A549 (cell line): ENCODE measurements at regions of chr12 and their contacts with region 1.

Region 1: GRCh38 chr12:121005346-121005815 is 10.9 kb downstream of the C12orf43 start:
- DNase-seq: peak in 1 of 2 experiments; percentile 79
- ATAC-seq: peak; percentile 55 to 70; a peak in 4 of 6 replicates
- H3K4me3 ChIP-seq: no peak overlapping the region
- H3K27ac ChIP-seq: no peak overlapping the region
- H3K4me1 ChIP-seq: peaks cover 4% of the 10 kb centered on the region; the same call in 2 of the 3 replicates
- CTCF ChIP-seq: peak; percentile 68
- EP300 ChIP-seq: no peak
- POLR2A ChIP-seq: no peak
- RAD21 ChIP-seq: peak; percentile 56 to 62

Region 2: DNA sequence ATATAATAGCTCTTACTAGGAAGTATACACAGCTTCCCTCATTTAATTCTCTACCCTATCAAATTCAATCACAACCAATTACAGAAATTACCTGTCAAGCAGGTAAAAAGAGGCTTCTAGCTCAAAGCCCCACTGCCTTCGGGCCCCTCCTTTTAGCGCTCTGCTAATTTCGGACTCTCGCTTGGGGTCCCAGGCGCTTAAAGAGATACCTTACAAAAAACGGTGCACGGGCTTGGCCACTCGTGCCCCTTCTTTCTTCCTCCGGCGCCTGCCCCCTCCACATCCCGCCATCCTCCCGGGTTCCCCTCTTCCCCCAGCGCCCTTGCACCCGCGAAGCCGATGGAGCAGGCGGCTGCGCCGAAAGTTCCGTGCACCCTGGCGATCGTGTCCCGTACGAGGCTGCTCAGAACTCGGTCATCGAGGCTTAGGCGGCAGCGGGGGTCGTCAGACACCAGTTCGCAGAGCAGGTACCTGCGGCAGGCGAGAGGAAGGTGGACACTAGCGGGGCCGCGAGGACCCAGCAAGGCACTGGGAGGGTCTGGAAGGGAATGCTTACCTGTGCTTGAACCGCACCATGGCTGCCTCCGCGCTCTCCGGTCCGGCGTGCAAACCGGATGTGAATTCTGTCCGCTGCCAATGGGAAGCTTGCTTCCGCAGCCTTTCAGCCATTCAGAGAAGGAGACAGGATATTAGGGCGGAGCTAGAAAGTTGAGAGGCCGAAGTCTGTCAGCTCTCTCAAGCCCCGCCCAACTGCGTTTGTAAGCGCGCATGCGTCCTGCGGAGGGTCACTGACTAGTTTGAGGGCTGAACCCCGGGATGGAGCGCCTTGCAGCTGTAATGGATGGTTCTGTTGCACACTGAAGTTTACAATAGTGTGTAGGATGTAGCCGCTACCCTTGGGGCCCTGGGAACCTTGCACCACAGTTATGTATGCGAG is 424.3 kb before region 1 on chr12 and contains the start of gene POP5:
- CTCF ChIA-PET with region 1: interaction called, 13 read pairs
- POLR2A ChIA-PET with region 1: no interaction called
- DNase-seq: peak; percentile 93 to 98
- ATAC-seq: peak; percentile 88 to 95
- H3K4me3 ChIP-seq: peak within 1 kb of the TSS; percentile 82
- H3K27ac ChIP-seq: peak within 1 kb of the TSS; percentile 85 to 86
- H3K4me1 ChIP-seq: peaks cover 7% of the 10 kb centered on the region; the same call in 2 of the 3 replicates
- CTCF ChIP-seq: no peak
- EP300 ChIP-seq: no peak
- POLR2A ChIP-seq: peak; percentile 88
- RAD21 ChIP-seq: no peak; a peak in 1 of 5 replicates
- polyA plus RNA-seq, gene POP5: 111 and 133 TPM in 2 replicates

Region 3: GRCh38 chr12:120971299-120972179 is 33.8 kb before region 1 on chr12:
- CTCF ChIA-PET with region 1: interaction called, 25 read pairs
- POLR2A ChIA-PET with region 1: no interaction called
- DNase-seq: peak; percentile 75 to 78
- ATAC-seq: peak; percentile 90 to 92
- H3K4me3 ChIP-seq: no peak overlapping the region
- H3K27ac ChIP-seq: no peak overlapping the region
- H3K4me1 ChIP-seq: peaks cover 11% of the 10 kb centered on the region
- CTCF ChIP-seq: peak; percentile 85
- EP300 ChIP-seq: no peak
- POLR2A ChIP-seq: no peak
- RAD21 ChIP-seq: peak; percentile 82 to 92

Region 4: GRCh38 chr12:120994589-120995337 is 10.6 kb before region 1 on chr12:
- CTCF ChIA-PET with region 1: interaction called, 27 read pairs
- POLR2A ChIA-PET with region 1: no interaction called
- DNase-seq: peak in 1 of 2 experiments; percentile 67
- ATAC-seq: no peak
- H3K4me3 ChIP-seq: no peak overlapping the region
- H3K27ac ChIP-seq: no peak overlapping the region
- H3K4me1 ChIP-seq: no peaks in the 10 kb centered on the region
- CTCF ChIP-seq: no peak
- EP300 ChIP-seq: no peak
- POLR2A ChIP-seq: no peak
- RAD21 ChIP-seq: no peak

Region 5: GRCh38 chr12:121095544-121096198 is 90.3 kb after region 1 on chr12:
- CTCF ChIA-PET with region 1: interaction called, 12 read pairs
- POLR2A ChIA-PET with region 1: no interaction called
- DNase-seq: peak; percentile 64 to 96
- ATAC-seq: peak; percentile 97 to 98
- H3K4me3 ChIP-seq: peak overlapping the region; percentile 39
- H3K27ac ChIP-seq: peak overlapping the region; percentile 7 to 68; a peak in 4 of 6 replicates
- H3K4me1 ChIP-seq: peaks cover 8% of the 10 kb centered on the region; the same call in 1 of the 3 replicates
- CTCF ChIP-seq: peak; percentile 86
- EP300 ChIP-seq: no peak
- POLR2A ChIP-seq: no peak
- RAD21 ChIP-seq: peak; percentile 76 to 78